ENCODE measurements at regions of chr7 and their contacts with region 1.

Region 1: DNA sequence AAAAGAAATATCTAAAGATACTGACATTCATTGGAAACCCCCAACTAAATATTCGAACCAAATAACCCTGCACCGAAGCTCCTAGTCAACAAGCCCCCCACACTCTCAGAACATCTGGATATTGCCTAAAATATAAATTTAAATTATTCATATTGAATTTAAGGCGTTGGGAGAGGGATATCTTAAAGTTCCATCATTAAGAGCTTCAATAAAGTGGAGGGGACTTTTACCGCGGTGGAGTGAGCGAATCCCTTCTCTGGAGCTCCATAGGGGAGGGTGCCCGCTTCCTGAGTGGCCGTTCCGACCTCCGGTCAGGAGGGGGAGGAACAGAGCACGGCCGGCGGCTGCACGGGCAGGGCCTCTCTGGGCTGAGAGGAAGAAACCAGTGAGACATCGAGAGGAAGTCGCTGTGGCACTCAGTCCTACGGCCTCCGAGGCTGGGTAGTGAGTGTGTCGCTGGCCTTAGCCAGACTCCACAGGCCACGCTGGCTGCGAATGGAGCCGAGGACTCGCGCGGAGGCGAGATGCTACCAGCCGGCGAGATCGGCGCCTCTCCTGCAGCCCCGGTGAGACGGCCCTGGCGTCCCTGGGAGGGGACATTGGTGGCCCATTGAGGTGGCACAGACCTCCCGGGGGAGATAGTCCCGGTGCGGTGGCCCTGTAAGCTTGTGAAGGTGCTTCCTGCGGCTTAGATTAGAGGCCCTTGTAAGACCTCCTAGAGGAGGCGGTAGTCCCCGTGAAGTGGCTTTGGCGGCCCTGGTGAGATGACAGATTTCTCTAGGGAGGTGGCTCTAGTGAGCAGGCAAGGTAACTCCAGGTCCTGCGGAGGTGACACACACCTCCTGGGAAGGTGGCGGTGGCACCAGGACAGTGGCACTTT is at the start of gene RINT1:
- DNase-seq: peak; percentile 95
- H3K4me3 ChIP-seq: peak within 1 kb of the TSS; percentile 80
- H3K27ac ChIP-seq: peak within 1 kb of the TSS; percentile 64
- H3K4me1 ChIP-seq: peaks cover 15% of the 10 kb centered on the region
- CTCF ChIP-seq: peak; percentile 85
- total RNA-seq, gene RINT1: 11.1 and 11.2 TPM in 2 replicates

Region 2: GRCh38 chr7:104943502-104944343 is 588.3 kb before region 1 on chr7:
- CTCF ChIA-PET with region 1: no interaction called
- POLR2A ChIA-PET with region 1: interaction called, 3 read pairs
- intact Hi-C with region 1: loop called (anchors 5 kb)
- DNase-seq: peak; percentile 88
- H3K4me3 ChIP-seq: peak overlapping the region; percentile 65
- H3K27ac ChIP-seq: peak overlapping the region; percentile 96
- H3K4me1 ChIP-seq: peaks cover 86% of the 10 kb centered on the region
- CTCF ChIP-seq: no peak

Region 3: GRCh38 chr7:105448181-105448580 is 83.9 kb before region 1 on chr7:
- CTCF ChIA-PET with region 1: no interaction called
- POLR2A ChIA-PET with region 1: no interaction called
- intact Hi-C with region 1: no loop called
- DNase-seq: no peak
- H3K4me3 ChIP-seq: no peak overlapping the region
- H3K27ac ChIP-seq: no peak overlapping the region
- H3K4me1 ChIP-seq: no peaks in the 10 kb centered on the region
- CTCF ChIP-seq: no peak

Region 4: GRCh38 chr7:106285051-106285854 is 753.2 kb after region 1 on chr7:
- CTCF ChIA-PET with region 1: no interaction called
- POLR2A ChIA-PET with region 1: no interaction called
- intact Hi-C with region 1: loop called (anchors 10 kb)
- DNase-seq: peak; percentile 95
- H3K4me3 ChIP-seq: peak overlapping the region; percentile 90
- H3K27ac ChIP-seq: peak overlapping the region; percentile 61
- H3K4me1 ChIP-seq: peaks cover 23% of the 10 kb centered on the region
- CTCF ChIP-seq: no peak

Measured in OCI-LY7 (cell line).